Tibial artery (tissue), 4 donors: ENCODE measurements at regions of chr15 and their contacts with region 1.

Region 1: DNA sequence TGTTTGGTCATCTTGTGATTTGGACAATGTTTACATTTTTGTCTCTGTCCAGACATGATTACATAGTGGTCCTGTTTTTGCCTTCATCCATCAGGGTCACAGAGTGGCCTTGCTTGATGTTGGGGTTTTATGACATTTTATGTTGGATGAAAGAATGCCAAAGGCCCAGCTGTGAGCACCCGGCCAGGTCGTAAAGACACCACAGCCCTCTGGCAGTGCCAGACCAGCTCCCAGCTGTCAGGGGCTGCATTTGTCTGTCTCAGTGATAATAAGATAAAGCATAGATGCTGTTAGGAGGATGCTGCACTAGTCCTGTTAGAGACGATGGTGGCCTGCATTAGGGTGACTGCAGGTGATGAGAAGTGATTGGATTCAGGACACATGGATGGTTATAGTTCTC is 117.5 kb downstream of the FAM174B start:
- DNase-seq: no peak
- H3K4me3 ChIP-seq: no peak overlapping the region
- H3K27ac ChIP-seq: no peak overlapping the region
- H3K4me1 ChIP-seq: no peaks in the 10 kb centered on the region
- H3K27me3 ChIP-seq: no peaks in the 10 kb centered on the region
- CTCF ChIP-seq: no peak

Region 2: GRCh38 chr15:92709110-92709790 is 171.1 kb after region 1 on chr15:
- intact Hi-C with region 1: loop called (anchors 5 kb)
- DNase-seq: no peak
- H3K4me3 ChIP-seq: no peak overlapping the region
- H3K27ac ChIP-seq: no peak overlapping the region
- H3K4me1 ChIP-seq: peaks cover 0 to 4% (median 0%) of the 10 kb centered on the region in 4 donors
- H3K27me3 ChIP-seq: no peaks in the 10 kb centered on the region
- CTCF ChIP-seq: no peak